ENCODE measurements at regions of chr5 and their contacts with region 1.

Region 1: GRCh38 chr5:76771705-76772405 is 47.0 kb upstream of the F2RL1 start:
- H3K4me3 Mint-ChIP-seq: no peak overlapping the region
- H3K27ac Mint-ChIP-seq: no peak overlapping the region
- H3K4me1 Mint-ChIP-seq: peaks cover 7% of the 10 kb centered on the region
- H3K27me3 Mint-ChIP-seq: no peaks in the 10 kb centered on the region

Region 2: GRCh38 chr5:76715736-76716455 is 56.0 kb before region 1 on chr5 and contains the start of gene F2R:
- intact Hi-C with region 1: loop called (anchors 5 kb)
- H3K4me3 Mint-ChIP-seq: peak within 1 kb of the TSS; percentile 88
- H3K27ac Mint-ChIP-seq: peak within 1 kb of the TSS; percentile 69
- H3K4me1 Mint-ChIP-seq: peaks cover 26% of the 10 kb centered on the region
- H3K27me3 Mint-ChIP-seq: peaks cover 71% of the 10 kb centered on the region